GM12878 (cell line): ENCODE measurements at regions of chr11 and their contacts with region 1.

Region 1: GRCh38 chr11:75802913-75803820 is 11.8 kb upstream of the UVRAG start:
- DNase-seq: no peak
- ATAC-seq: peak; percentile 98
- H3K4me3 ChIP-seq: no peak overlapping the region
- H3K27ac ChIP-seq: no peak overlapping the region
- H3K4me1 ChIP-seq: no peaks in the 10 kb centered on the region
- H3K27me3 ChIP-seq: no peaks in the 10 kb centered on the region
- CTCF ChIP-seq: peak; percentile 91 to 96 (median 95)
- EP300 ChIP-seq: no peak
- POLR2A ChIP-seq: no peak
- RAD21 ChIP-seq: peak; percentile 97

Region 2: DNA sequence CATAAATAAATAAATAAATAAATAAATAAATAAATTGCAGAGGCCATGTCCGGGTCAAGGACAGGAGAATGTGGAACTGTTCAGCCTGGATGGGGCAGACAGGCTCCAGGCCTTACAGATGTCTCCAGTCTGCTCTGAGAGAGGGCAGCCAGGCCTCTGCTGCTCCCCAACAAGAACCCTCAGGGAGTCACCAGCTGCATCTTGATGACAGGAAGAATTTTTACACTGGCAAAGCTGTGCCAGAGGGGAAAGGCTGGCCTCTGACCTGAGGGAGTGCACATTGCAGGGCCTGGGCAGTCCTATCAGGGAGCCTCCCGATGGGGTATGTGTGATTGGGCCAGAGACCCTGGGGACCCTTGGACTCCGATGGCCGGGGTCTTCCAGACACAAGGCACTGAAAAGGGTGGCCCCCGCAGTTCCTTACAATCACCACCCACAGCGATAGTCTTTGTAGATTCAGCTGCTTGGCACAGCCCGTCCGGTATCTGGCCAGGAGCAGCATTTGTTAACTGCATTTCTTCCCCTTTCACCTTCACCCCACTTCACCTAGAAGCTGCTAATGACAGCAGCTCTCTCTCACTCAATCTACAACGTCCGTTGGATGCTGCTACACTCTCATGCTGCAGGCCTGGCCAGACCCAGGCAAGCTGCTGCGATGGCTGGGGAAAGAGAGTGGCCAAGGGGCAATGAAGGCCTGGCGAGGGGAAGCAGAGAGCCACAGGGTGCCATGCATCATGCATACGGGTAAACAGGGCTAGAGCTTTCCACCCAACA is 77.4 kb before region 1 on chr11:
- CTCF ChIA-PET with region 1: interaction called, 23 read pairs
- POLR2A ChIA-PET with region 1: no interaction called
- RAD21 ChIA-PET with region 1: interaction called, 9 read pairs
- SMC1A ChIA-PET with region 1: interaction called, 7 read pairs
- in situ Hi-C with region 1: no loop called
- intact Hi-C with region 1: loop called (anchors 1 kb)
- DNase-seq: no peak
- ATAC-seq: no peak
- H3K4me3 ChIP-seq: no peak overlapping the region
- H3K27ac ChIP-seq: no peak overlapping the region
- H3K4me1 ChIP-seq: no peaks in the 10 kb centered on the region
- H3K27me3 ChIP-seq: no peaks in the 10 kb centered on the region
- CTCF ChIP-seq: no peak
- EP300 ChIP-seq: no peak
- POLR2A ChIP-seq: no peak
- RAD21 ChIP-seq: no peak

Region 3: GRCh38 chr11:75814686-75815344 is 11.6 kb after region 1 on chr11 and contains the start of gene UVRAG:
- CTCF ChIA-PET with region 1: interaction called, 65 read pairs
- POLR2A ChIA-PET with region 1: interaction called, 6 read pairs
- RAD21 ChIA-PET with region 1: interaction called, 26 read pairs
- SMC1A ChIA-PET with region 1: interaction called, 26 read pairs
- in situ Hi-C with region 1: no loop called
- intact Hi-C with region 1: no loop called
- DNase-seq: peak; percentile 100
- ATAC-seq: peak; percentile 86
- H3K4me3 ChIP-seq: peak within 1 kb of the TSS; percentile 93
- H3K27ac ChIP-seq: peak within 1 kb of the TSS; percentile 94
- H3K4me1 ChIP-seq: peaks cover 39% of the 10 kb centered on the region
- H3K27me3 ChIP-seq: no peaks in the 10 kb centered on the region
- CTCF ChIP-seq: no peak
- EP300 ChIP-seq: no peak
- POLR2A ChIP-seq: peak; percentile 87
- RAD21 ChIP-seq: no peak
- polyA plus RNA-seq, gene UVRAG: 7.0 to 11.2 TPM

Region 4: GRCh38 chr11:75836417-75836816 is 33.2 kb after region 1 on chr11:
- CTCF ChIA-PET with region 1: interaction called, 9 read pairs
- POLR2A ChIA-PET with region 1: interaction called, 3 read pairs
- RAD21 ChIA-PET with region 1: interaction called, 7 read pairs
- SMC1A ChIA-PET with region 1: interaction called, 11 read pairs
- in situ Hi-C with region 1: no loop called
- intact Hi-C with region 1: no loop called
- DNase-seq: no peak
- ATAC-seq: peak; percentile 84
- H3K4me3 ChIP-seq: peak overlapping the region; percentile 18; the same call in 1 of the 2 replicates
- H3K27ac ChIP-seq: peak overlapping the region; percentile 58
- H3K4me1 ChIP-seq: peaks cover 17% of the 10 kb centered on the region
- H3K27me3 ChIP-seq: no peaks in the 10 kb centered on the region
- CTCF ChIP-seq: no peak
- EP300 ChIP-seq: no peak
- POLR2A ChIP-seq: no peak
- RAD21 ChIP-seq: no peak

Region 5: DNA sequence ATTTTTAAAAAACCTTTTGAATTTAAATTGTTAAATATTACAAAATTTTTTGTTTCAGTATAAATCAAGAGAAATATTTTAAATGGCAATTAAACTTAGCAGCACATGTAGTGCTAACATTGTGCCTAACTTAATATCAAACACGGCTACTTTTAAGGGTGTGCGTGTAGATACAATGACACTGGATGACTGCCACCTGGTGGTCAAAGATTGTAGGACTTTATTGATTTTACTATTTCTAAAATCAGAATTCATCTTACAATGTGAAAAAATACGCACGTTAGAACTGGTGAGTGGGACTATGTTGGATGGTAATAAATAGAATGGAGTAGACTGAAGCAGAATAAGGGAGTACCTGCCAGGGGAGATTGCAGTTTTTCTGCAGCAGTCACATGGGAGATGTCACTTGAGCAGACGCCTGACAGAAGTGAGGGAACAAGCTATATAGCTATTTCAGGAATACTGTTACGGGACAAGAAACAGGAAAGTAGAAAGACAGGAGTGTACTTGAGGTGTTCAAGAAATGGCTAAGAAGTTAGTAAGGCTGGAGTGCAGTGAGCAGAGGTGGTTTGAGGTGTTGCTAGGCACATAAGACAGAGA is 64.7 kb after region 1 on chr11:
- CTCF ChIA-PET with region 1: interaction called, 234 read pairs
- POLR2A ChIA-PET with region 1: interaction called, 3 read pairs
- RAD21 ChIA-PET with region 1: interaction called, 172 read pairs
- SMC1A ChIA-PET with region 1: interaction called, 238 read pairs
- in situ Hi-C with region 1: loop called (anchors 5 kb)
- intact Hi-C with region 1: loop called (anchors 1 kb)
- DNase-seq: peak; percentile 24
- ATAC-seq: peak; percentile 84
- H3K4me3 ChIP-seq: no peak overlapping the region
- H3K27ac ChIP-seq: no peak overlapping the region
- H3K4me1 ChIP-seq: peaks cover 15% of the 10 kb centered on the region
- H3K27me3 ChIP-seq: no peaks in the 10 kb centered on the region
- CTCF ChIP-seq: peak; percentile 50 to 65 (median 65); a peak in 5 of 6 replicates
- EP300 ChIP-seq: no peak
- POLR2A ChIP-seq: no peak
- RAD21 ChIP-seq: peak; percentile 84

Region 6: DNA sequence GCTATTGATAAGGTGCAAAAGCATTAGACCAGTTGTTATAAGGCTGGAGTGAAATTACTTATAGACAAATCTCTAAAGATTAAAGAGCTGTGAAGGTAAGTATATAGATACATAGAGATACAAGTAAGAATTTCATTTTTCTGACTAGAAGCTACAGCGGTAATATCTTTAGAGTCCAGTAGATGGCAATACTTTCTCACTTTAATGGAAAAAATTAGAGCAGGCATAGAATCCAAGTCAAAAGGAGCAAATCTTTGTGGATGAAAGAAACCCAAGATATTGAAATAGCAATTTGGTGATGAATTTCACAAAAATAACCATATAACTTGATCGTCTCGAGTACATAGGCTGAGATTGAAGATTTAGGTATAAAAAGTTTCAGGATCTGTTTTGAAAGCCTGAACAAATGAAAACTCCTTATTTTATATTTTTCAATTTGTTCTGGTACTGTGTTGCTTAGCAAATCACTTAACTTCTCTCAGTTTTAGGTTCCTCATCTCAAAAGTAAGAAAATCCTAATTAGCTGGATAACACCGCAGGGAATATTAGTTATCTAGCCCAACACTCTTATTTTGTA is 93.8 kb after region 1 on chr11:
- CTCF ChIA-PET with region 1: interaction called, 10 read pairs
- POLR2A ChIA-PET with region 1: interaction called, 6 read pairs
- RAD21 ChIA-PET with region 1: interaction called, 12 read pairs
- SMC1A ChIA-PET with region 1: interaction called, 29 read pairs
- in situ Hi-C with region 1: no loop called
- intact Hi-C with region 1: no loop called
- DNase-seq: no peak
- ATAC-seq: peak; percentile 46
- H3K4me3 ChIP-seq: no peak overlapping the region
- H3K27ac ChIP-seq: no peak overlapping the region
- H3K4me1 ChIP-seq: peaks cover 8% of the 10 kb centered on the region
- H3K27me3 ChIP-seq: no peaks in the 10 kb centered on the region
- CTCF ChIP-seq: peak; percentile 55 to 62 (median 57)
- EP300 ChIP-seq: no peak
- POLR2A ChIP-seq: no peak
- RAD21 ChIP-seq: peak; percentile 77

Region 7: GRCh38 chr11:76318744-76319384 is 515.7 kb after region 1 on chr11:
- CTCF ChIA-PET with region 1: interaction called, 5 read pairs
- POLR2A ChIA-PET with region 1: no interaction called
- RAD21 ChIA-PET with region 1: no interaction called
- SMC1A ChIA-PET with region 1: no interaction called
- in situ Hi-C with region 1: no loop called
- intact Hi-C with region 1: loop called (anchors 2 kb)
- DNase-seq: peak; percentile 30
- ATAC-seq: peak; percentile 99
- H3K4me3 ChIP-seq: no peak overlapping the region
- H3K27ac ChIP-seq: no peak overlapping the region
- H3K4me1 ChIP-seq: no peaks in the 10 kb centered on the region
- H3K27me3 ChIP-seq: peaks cover 16 to 27% of the 10 kb centered on the region in 2 experiments
- CTCF ChIP-seq: peak; percentile 92 to 98 (median 92)
- EP300 ChIP-seq: no peak
- POLR2A ChIP-seq: no peak
- RAD21 ChIP-seq: peak; percentile 95